Activated naive CD4-positive, alpha-beta T cell treated with anti-CD3 and anti-CD28 coated beads for 36 hours (primary cell): ENCODE measurements at regions of chr12 and their contacts with region 1.

Region 1: GRCh38 chr12:43669373-43669772 is 89.2 kb downstream of the PUS7L start:
- DNase-seq: no peak
- H3K4me3 Mint-ChIP-seq: no peak overlapping the region
- H3K27ac Mint-ChIP-seq: no peak overlapping the region
- H3K4me1 Mint-ChIP-seq: no peaks in the 10 kb centered on the region
- H3K27me3 Mint-ChIP-seq: peaks cover 10% of the 10 kb centered on the region

Region 2: GRCh38 chr12:43349863-43350262 is 319.5 kb before region 1 on chr12:
- CTCF ChIA-PET with region 1: no interaction called
- intact Hi-C with region 1: loop called (anchors 10 kb)
- DNase-seq: no peak
- H3K4me3 Mint-ChIP-seq: no peak overlapping the region
- H3K27ac Mint-ChIP-seq: no peak overlapping the region
- H3K4me1 Mint-ChIP-seq: no peaks in the 10 kb centered on the region
- H3K27me3 Mint-ChIP-seq: peaks cover 2% of the 10 kb centered on the region